IMR-90 (cell line): ENCODE measurements at regions of chr2 and their contacts with region 1.

Region 1: GRCh38 chr2:191677646-191678436 is at the start of gene NABP1:
- DNase-seq: peak; percentile 97
- ATAC-seq: peak; percentile 95
- H3K4me3 ChIP-seq: peak within 1 kb of the TSS; percentile 73
- H3K27ac ChIP-seq: peak within 1 kb of the TSS; percentile 89
- H3K4me1 ChIP-seq: peaks cover 5% of the 10 kb centered on the region; the same call in 1 of the 2 replicates
- H3K27me3 ChIP-seq: no peaks in the 10 kb centered on the region
- CTCF ChIP-seq: no peak
- POLR2A ChIP-seq: peak; percentile 100
- RAD21 ChIP-seq: peak; percentile 26
- total RNA-seq, gene NABP1: 57.7 and 141 TPM in 2 replicates

Region 2: GRCh38 chr2:191376981-191377629 is 300.7 kb before region 1 on chr2:
- CTCF ChIA-PET with region 1: no interaction called
- POLR2A ChIA-PET with region 1: interaction called, 24 read pairs
- dilution Hi-C with region 1: no loop called
- in situ Hi-C with region 1: no loop called
- intact Hi-C with region 1: no loop called
- DNase-seq: peak; percentile 93
- ATAC-seq: peak; percentile 85
- H3K4me3 ChIP-seq: no peak overlapping the region
- H3K27ac ChIP-seq: no peak overlapping the region
- H3K4me1 ChIP-seq: peaks cover 6% of the 10 kb centered on the region
- H3K27me3 ChIP-seq: no peaks in the 10 kb centered on the region
- CTCF ChIP-seq: no peak
- POLR2A ChIP-seq: no peak
- RAD21 ChIP-seq: no peak

Region 3: GRCh38 chr2:191582355-191582754 is 95.5 kb before region 1 on chr2:
- CTCF ChIA-PET with region 1: no interaction called
- POLR2A ChIA-PET with region 1: interaction called, 10 read pairs
- dilution Hi-C with region 1: no loop called
- in situ Hi-C with region 1: no loop called
- intact Hi-C with region 1: no loop called
- DNase-seq: peak; percentile 87
- ATAC-seq: peak; percentile 89
- H3K4me3 ChIP-seq: no peak overlapping the region
- H3K27ac ChIP-seq: 0 out of 2 replicates have a peak overlapping the region, but pooled peaks have one; percentile 32
- H3K4me1 ChIP-seq: no peaks in the 10 kb centered on the region
- H3K27me3 ChIP-seq: no peaks in the 10 kb centered on the region
- CTCF ChIP-seq: no peak
- POLR2A ChIP-seq: no peak
- RAD21 ChIP-seq: no peak

Region 4: DNA sequence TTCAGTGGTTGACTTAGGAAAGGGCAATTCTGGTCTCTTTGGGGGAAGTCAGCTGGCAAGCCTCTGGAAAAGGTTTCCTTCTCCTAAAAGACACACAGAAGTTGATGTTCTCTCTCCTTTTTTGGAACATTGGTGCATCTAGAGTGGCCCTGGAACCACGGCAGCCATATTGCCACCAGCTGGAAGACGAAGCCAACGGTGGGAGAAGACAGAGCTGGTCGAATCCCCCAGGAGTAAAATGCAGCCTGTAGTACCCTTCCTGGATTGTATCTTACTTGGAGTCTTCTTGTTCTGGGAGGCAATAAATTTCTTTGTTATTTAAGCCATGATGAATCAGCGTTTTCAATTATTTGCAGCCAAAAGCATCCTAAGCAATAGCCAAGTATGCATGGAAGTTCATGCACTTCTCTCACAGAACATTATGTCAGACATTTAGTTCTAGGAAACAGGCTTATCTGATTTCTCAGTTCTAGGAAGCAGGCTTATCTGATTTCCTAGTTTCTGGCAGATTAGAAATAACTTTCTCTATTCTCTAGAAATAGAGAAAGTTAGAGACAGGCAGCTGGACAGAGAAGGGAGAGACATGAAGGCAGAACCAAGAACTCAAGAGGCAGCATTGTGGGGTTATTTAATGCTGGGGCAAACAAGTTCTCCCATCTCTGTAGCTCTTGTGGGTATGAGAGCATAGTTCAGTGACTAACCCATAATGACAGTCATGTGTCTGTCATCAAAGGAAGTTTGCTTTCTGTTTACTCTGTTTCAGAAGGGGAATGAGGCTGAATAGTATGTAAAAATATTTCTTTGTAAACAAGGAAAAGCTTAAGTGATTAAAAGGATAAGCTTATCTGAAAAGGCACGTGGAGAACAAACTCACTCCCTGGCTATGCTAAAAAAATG is 40.4 kb before region 1 on chr2:
- CTCF ChIA-PET with region 1: interaction called, 5 read pairs
- POLR2A ChIA-PET with region 1: interaction called, 57 read pairs
- dilution Hi-C with region 1: no loop called
- in situ Hi-C with region 1: no loop called
- intact Hi-C with region 1: loop called (anchors 1 kb)
- DNase-seq: peak; percentile 71
- ATAC-seq: peak; percentile 18
- H3K4me3 ChIP-seq: no peak overlapping the region
- H3K27ac ChIP-seq: peak overlapping the region; percentile 100
- H3K4me1 ChIP-seq: peaks cover 21% of the 10 kb centered on the region
- H3K27me3 ChIP-seq: no peaks in the 10 kb centered on the region
- CTCF ChIP-seq: no peak
- POLR2A ChIP-seq: no peak
- RAD21 ChIP-seq: no peak

Region 5: GRCh38 chr2:191660575-191661388 is 17.1 kb before region 1 on chr2:
- CTCF ChIA-PET with region 1: interaction called, 7 read pairs
- POLR2A ChIA-PET with region 1: interaction called, 14 read pairs
- dilution Hi-C with region 1: no loop called
- in situ Hi-C with region 1: no loop called
- intact Hi-C with region 1: no loop called
- DNase-seq: no peak
- ATAC-seq: no peak
- H3K4me3 ChIP-seq: no peak overlapping the region
- H3K27ac ChIP-seq: no peak overlapping the region
- H3K4me1 ChIP-seq: peaks cover 14% of the 10 kb centered on the region
- H3K27me3 ChIP-seq: no peaks in the 10 kb centered on the region
- CTCF ChIP-seq: no peak
- POLR2A ChIP-seq: no peak
- RAD21 ChIP-seq: no peak

Region 6: GRCh38 chr2:191707542-191707941 is 29.7 kb after region 1 on chr2:
- CTCF ChIA-PET with region 1: no interaction called
- POLR2A ChIA-PET with region 1: no interaction called
- dilution Hi-C with region 1: no loop called
- in situ Hi-C with region 1: no loop called
- intact Hi-C with region 1: no loop called
- DNase-seq: no peak
- ATAC-seq: no peak
- H3K4me3 ChIP-seq: no peak overlapping the region
- H3K27ac ChIP-seq: no peak overlapping the region
- H3K4me1 ChIP-seq: peaks cover 6% of the 10 kb centered on the region
- H3K27me3 ChIP-seq: no peaks in the 10 kb centered on the region; the same call in 1 of the 2 replicates
- CTCF ChIP-seq: no peak
- POLR2A ChIP-seq: no peak
- RAD21 ChIP-seq: no peak